H1 (cell line): ENCODE measurements at regions of chr13 and their contacts with region 1.

Region 1: DNA sequence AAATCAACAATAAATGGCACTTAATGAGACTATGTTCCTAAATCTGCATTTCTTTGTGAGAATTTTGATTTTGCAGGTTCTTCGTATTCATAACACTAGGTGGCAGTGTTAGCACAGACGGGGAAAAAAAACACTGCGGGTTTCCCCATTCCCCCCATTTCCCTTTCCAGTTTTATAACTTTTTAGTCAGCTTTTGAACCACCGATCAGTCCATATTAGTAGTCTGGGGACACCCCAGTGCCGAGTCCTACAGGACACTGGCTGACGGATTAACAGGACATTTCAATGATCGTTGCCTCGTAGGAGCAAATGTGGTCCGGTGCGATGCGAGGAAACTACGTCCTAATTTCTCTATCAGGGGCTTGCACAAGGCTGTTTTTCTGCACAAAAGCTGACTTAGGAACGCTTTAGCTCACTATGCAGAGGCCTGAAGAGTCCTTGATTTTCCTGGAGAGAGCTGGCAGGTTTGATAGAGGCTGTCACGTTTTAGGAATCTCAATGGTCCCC is 234.3 kb downstream of the LMO7 start:
- DNase-seq: peak in 1 of 2 experiments; percentile 62
- H3K4me3 ChIP-seq: no peak overlapping the region
- H3K27ac ChIP-seq: no peak overlapping the region
- H3K4me1 ChIP-seq: peaks cover 0 to 8% (median 3%) of the 10 kb centered on the region in 4 experiments; a peak in 6 of 7 replicates
- H3K27me3 ChIP-seq: no peaks in the 10 kb centered on the region
- CTCF ChIP-seq: peak in 2 of 3 experiments; percentile 43; a peak in 2 of 4 replicates
- EP300 ChIP-seq: no peak
- POLR2A ChIP-seq: no peak
- RAD21 ChIP-seq: peak; percentile 64 to 65

Region 2: GRCh38 chr13:75687150-75687763 is 183.2 kb before region 1 on chr13:
- CTCF ChIA-PET with region 1: interaction called, 25 read pairs
- POLR2A ChIA-PET with region 1: no interaction called
- DNase-seq: no peak
- H3K4me3 ChIP-seq: no peak overlapping the region
- H3K27ac ChIP-seq: no peak overlapping the region
- H3K4me1 ChIP-seq: peaks cover 2 to 7% (median 5%) of the 10 kb centered on the region in 4 experiments; a peak in 6 of 7 replicates
- H3K27me3 ChIP-seq: no peaks in the 10 kb centered on the region
- CTCF ChIP-seq: peak in 2 of 3 experiments; percentile 42 to 51; a peak in 2 of 4 replicates
- EP300 ChIP-seq: no peak
- POLR2A ChIP-seq: no peak
- RAD21 ChIP-seq: peak; percentile 64 to 65

Region 3: GRCh38 chr13:75855847-75856246 is 14.6 kb before region 1 on chr13:
- CTCF ChIA-PET with region 1: interaction called, 20 read pairs
- POLR2A ChIA-PET with region 1: no interaction called
- DNase-seq: no peak
- H3K4me3 ChIP-seq: no peak overlapping the region
- H3K27ac ChIP-seq: no peak overlapping the region
- H3K4me1 ChIP-seq: no peaks in the 10 kb centered on the region
- H3K27me3 ChIP-seq: no peaks in the 10 kb centered on the region
- CTCF ChIP-seq: no peak
- EP300 ChIP-seq: no peak
- POLR2A ChIP-seq: no peak
- RAD21 ChIP-seq: no peak

Region 4: DNA sequence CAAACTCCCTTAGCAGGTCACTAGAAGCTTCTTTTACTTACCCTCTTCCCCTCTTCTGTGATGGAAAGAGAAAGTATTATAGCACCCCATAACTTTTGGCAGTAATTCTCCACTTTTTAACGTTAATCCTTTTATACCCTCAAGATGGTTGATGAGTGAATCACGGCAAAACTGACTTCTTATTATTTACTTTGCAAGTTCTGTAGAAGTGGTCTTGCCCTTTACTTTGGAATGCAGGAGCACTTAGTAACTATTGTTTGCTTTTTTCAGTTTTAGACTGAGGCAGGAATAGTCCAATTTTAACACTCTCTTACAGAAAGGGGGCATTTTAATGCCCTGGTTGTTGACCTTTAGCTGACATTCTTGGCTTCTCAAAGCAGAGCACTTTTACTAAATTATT is 25.8 kb after region 1 on chr13:
- CTCF ChIA-PET with region 1: interaction called, 47 read pairs
- POLR2A ChIA-PET with region 1: no interaction called
- DNase-seq: no peak
- H3K4me3 ChIP-seq: no peak overlapping the region
- H3K27ac ChIP-seq: no peak overlapping the region
- H3K4me1 ChIP-seq: peaks cover 0 to 4% (median 3%) of the 10 kb centered on the region in 4 experiments; a peak in 3 of 7 replicates
- H3K27me3 ChIP-seq: no peaks in the 10 kb centered on the region
- CTCF ChIP-seq: no peak
- EP300 ChIP-seq: no peak
- POLR2A ChIP-seq: no peak
- RAD21 ChIP-seq: no peak

Region 5: GRCh38 chr13:75908141-75908540 is 37.7 kb after region 1 on chr13:
- CTCF ChIA-PET with region 1: interaction called, 31 read pairs
- POLR2A ChIA-PET with region 1: no interaction called
- DNase-seq: no peak
- H3K4me3 ChIP-seq: no peak overlapping the region
- H3K27ac ChIP-seq: no peak overlapping the region
- H3K4me1 ChIP-seq: no peaks in the 10 kb centered on the region
- H3K27me3 ChIP-seq: no peaks in the 10 kb centered on the region
- CTCF ChIP-seq: no peak
- EP300 ChIP-seq: no peak
- POLR2A ChIP-seq: no peak
- RAD21 ChIP-seq: no peak

Region 6: DNA sequence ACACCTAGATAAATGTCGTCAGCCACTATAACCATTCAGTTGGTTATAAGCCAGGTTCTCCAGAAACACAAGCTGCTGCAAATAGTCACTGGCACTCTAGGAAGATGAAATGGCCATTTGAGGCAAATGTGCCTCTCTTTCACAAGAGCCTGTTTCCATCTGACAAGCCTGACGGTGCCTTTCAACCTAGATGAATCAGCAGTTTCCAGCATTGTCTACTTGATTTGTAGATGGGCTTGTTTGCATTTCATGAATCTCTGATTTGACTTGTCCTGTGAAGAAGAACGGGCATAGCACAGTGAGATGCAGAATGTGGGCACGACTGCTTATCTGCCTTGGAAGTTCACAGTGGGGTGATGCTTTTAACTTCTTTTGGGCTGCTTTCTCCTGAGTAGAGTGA is 92.9 kb after region 1 on chr13:
- CTCF ChIA-PET with region 1: no interaction called
- POLR2A ChIA-PET with region 1: no interaction called
- DNase-seq: no peak
- H3K4me3 ChIP-seq: no peak overlapping the region
- H3K27ac ChIP-seq: no peak overlapping the region
- H3K4me1 ChIP-seq: no peaks in the 10 kb centered on the region
- H3K27me3 ChIP-seq: no peaks in the 10 kb centered on the region
- CTCF ChIP-seq: no peak
- EP300 ChIP-seq: no peak
- POLR2A ChIP-seq: no peak
- RAD21 ChIP-seq: no peak

Region 7: DNA sequence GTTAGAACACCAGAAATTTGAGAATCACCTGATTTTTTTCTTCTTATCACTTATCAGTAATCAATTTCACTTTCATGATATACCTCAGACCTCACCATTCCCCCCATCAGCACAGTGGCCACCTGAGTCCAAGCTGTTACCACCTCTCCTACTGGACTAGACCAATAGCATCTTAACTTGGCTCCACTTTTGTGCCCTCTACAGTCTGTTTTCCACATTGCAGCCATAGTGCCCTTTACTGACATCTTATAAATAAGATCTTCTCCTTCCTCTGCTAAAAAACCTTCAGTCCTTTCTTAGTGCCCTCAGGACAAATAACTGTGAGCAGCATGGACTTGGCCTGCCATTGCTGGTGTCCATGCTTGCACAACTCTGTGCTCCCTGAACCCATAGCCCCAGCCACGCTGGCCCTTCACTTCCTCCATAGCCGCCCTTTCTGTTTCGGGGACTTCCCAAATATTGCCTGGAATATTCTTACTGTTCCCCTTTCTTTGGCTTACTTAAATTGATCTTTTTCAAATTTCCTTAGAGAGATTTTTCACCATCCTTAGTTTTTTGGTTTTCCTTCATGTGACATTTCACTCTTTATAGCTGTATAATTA is 146.4 kb after region 1 on chr13:
- CTCF ChIA-PET with region 1: interaction called, 80 read pairs
- POLR2A ChIA-PET with region 1: no interaction called
- DNase-seq: peak in 1 of 2 experiments; percentile 73
- H3K4me3 ChIP-seq: no peak overlapping the region
- H3K27ac ChIP-seq: no peak overlapping the region
- H3K4me1 ChIP-seq: no peaks in the 10 kb centered on the region
- H3K27me3 ChIP-seq: no peaks in the 10 kb centered on the region
- CTCF ChIP-seq: peak; percentile 5 to 75 (median 52); a peak in 3 of 4 replicates
- EP300 ChIP-seq: no peak
- POLR2A ChIP-seq: no peak
- RAD21 ChIP-seq: peak; percentile 61

Region 8: GRCh38 chr13:76160961-76161925 is 290.8 kb after region 1 on chr13:
- CTCF ChIA-PET with region 1: no interaction called
- POLR2A ChIA-PET with region 1: no interaction called
- DNase-seq: no peak
- H3K4me3 ChIP-seq: no peak overlapping the region
- H3K27ac ChIP-seq: no peak overlapping the region
- H3K4me1 ChIP-seq: no peaks in the 10 kb centered on the region
- H3K27me3 ChIP-seq: no peaks in the 10 kb centered on the region
- CTCF ChIP-seq: no peak
- EP300 ChIP-seq: no peak
- POLR2A ChIP-seq: no peak
- RAD21 ChIP-seq: no peak